GM13976 (cell line): ENCODE measurements at regions of chr9 and their contacts with region 1.

Region 1: DNA sequence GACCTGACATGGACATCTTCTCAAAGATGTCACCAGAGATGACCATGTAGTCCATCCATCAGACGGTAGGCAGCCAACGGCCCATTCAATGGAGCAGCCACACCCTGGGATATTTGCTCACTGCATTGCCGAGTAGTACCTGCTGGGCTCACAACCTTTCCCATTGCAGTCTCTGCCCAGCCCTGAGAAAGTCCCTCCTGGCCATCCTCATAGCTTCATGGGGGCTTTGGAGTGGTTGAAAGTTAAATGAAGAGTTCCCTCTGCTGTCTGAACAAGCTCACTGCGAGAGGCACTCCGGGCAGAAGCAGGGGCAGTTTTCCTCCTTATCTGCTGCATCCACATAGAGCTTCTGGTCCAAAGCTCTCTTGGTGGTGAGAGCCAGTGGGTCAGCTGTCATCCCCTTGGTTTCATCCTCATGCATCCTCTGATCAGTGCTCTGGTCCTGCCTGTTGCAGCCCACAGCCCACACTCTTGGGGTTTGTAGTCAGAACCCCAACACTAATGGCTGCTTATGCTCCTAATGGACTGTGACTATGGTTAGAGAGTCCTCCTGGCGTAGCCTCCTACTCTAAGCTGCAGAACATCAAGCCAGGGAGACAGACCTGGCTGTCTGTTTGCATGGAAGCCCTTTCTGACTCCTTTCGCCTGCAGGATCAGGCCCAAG is 23.4 kb downstream of the TNFSF8 start:
- DNase-seq: peak; percentile 29
- CTCF ChIP-seq: peak; percentile 48

Region 2: DNA sequence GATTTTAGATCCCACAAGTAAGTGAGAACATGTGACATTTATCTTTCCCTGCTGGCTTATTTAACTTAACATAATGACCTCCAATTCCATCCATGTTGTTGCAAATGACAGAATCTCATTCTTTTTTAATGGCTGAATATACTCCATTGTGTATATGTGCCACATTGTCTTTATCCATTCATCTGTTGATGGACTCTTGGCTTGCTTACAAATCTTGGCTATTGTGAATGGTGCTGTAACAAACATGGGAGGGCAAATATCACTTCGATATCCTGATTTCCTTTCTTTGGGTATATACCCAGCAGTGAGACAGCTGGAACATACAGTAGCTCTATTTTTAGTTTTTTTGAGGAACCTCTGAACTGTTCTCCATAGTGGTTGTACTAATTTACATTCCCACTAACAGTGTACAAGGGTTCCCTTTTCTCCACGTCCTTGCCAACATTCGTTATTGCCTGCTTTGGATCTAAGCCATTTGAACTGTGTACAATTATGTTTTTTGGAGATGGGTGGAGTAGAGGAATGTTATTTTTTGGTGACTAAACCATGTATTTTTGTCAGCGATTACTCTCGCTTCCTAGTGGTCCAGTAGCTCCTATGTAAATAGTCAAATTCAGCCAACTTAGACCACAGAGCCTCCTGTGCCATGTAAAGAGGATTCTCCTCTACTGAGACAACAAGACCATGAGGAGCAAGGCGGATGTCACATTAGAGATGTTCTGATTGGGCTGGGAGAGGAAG is 161.8 kb before region 1 on chr9:
- in situ Hi-C with region 1: loop called (anchors 10 kb)
- DNase-seq: no peak
- CTCF ChIP-seq: no peak